HEK293T (cell line): ENCODE measurements at regions of chr20 and their contacts with region 1.

Region 1: GRCh38 chr20:2651772-2652723 is at the start of gene NOP56:
- DNase-seq: peak; percentile 93

Region 2: DNA sequence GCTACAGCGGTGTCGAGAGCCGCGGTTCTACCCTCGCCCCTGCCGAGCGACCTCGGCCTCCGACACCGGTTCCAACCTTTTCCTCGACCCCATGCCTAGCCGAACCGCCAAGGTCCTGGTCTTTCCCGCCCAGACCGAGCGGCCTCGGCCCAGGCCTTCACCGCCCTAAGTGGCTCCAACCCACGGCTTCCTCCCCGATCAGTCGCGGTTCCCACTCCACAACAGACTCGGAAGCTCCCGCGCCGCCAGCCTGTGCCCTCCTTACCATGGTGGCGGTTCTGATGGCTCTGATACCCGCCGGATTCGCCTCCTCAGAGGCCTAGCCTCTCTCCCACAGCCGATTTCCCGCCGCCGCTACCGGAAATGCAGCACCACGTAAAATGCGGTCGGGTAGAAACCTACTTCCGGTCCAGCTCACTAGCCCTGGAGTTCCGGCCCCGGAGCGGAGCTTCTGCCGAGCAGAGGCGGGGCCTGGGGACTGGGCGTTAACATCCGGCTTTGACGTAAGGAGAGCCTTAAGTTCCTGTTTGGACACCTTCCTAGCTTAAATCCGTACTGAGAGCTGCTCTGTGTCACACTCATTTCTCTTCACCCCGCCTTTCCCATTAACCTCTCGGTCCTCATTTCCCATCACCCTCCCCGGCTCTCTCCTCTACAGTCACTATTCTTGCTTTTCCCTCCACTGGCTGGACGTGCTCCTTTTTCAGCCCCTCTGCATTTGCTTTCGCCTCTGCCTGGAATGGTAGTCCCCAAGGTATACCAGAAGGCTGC is 181.4 kb before region 1 on chr20 and contains the start of gene SNRPB:
- CTCF ChIA-PET with region 1: no interaction called
- POLR2A ChIA-PET with region 1: interaction called, 34 read pairs
- DNase-seq: peak; percentile 96

Region 3: GRCh38 chr20:2523919-2524708 is 127.9 kb before region 1 on chr20:
- CTCF ChIA-PET with region 1: interaction called, 11 read pairs
- POLR2A ChIA-PET with region 1: interaction called, 33 read pairs
- DNase-seq: peak; percentile 83

Region 4: DNA sequence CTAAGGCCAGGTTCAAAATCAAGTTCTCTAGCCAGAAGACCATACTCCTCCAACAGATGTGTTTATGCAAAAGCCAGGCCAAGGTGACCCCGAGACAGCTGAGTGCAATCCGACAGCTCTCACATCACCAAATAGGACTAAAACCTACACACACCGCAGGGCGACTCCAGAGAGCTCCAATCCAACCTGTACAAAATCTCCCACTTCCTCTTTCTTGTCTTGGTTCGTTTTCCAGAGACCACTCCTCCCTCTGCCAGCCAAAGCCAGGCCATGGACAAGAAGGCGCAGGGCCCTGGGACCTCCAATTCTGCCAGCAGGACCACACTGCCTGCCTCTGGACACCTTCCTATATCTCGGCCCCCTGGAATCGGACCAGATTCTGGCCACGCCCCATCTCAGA is 11.1 kb before region 1 on chr20:
- CTCF ChIA-PET with region 1: interaction called, 5 read pairs
- POLR2A ChIA-PET with region 1: interaction called, 13 read pairs
- DNase-seq: no peak

Region 5: DNA sequence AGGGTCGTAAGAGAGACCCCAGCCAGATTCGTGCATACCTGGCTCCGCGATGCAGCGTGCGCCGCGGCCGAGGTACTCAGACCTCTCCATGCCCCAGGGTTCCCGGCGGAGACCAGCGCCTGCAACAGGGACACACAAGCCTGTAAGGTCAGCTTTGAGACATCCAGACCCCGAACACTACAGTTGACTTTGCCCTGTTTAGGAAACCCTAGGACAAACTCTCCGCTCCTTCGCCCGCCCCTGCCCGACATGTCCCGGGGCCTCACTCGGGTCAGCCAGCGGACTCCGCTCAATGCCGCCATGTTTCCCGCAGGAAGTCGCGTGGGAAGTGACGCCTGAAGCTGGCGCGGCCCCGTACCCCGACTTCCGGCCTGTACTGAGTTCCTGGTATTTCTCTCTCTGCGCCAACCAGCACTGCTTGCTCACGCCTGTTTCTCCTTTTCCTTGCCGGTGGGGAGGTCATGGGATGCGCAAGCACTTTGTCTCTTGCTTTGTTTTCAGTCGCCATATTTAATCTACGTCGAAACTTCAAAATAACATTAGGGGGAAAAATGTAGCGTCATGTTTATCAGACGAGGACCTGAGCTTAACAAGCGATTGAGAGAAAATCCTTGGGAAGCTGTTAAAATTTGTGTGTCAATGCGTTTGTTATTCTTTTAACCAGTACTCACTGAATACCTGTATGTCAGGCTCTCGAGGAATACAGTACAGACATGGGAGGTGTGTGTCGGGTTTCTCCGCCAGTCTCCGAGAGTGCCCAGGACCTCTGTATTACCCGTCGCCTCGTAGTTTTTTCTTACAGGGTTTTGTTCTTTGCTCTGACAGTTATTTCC is 12.1 kb after region 1 on chr20 and contains the start of gene IDH3B:
- CTCF ChIA-PET with region 1: interaction called, 3 read pairs
- POLR2A ChIA-PET with region 1: interaction called, 79 read pairs
- DNase-seq: peak; percentile 90

Region 6: DNA sequence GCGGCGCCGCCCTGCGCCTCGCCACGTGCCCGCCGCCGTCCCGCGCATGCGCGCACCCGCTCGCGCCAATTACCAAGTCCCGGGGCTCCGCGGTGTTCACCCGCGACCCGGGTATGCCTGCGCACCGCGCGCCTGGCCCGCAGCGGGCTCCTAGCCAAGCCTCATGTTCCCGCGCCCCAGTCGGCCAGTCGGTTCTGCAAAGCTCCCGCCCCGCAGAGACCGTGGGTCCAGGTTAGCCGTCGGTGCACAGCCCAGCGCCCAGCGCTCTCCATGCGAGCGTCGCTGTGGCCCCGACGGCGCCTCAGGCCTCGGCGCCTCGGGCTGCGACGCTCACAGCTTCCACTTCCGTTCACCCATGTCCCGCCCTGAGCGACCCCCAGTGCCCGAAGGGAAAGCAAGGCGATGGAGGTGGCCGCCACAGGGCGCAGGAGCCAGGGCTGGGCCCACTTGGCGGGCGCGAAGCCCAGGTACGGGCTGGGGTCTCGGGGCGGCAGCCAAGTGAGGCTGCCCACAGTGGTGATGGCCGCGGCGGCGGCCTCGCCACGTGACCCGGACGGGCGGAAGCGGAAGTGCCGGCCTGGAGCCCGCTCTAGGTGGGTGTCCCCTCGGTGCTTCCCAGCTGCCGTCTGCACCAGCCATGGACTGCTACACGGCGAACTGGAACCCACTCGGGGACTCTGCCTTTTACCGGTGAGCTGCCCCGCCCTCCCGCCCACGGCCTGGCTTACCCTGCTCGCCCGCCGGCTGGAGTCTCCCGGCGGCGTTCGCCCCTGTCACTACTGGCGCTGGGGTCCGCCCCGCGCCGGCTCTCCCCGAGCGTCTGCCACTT is 188.3 kb after region 1 on chr20 and contains the starts of genes PCED1A and VPS16:
- CTCF ChIA-PET with region 1: no interaction called
- POLR2A ChIA-PET with region 1: no interaction called
- DNase-seq: peak; percentile 98